ENCODE measurements at regions of chr5 and their contacts with region 1.

Region 1: DNA sequence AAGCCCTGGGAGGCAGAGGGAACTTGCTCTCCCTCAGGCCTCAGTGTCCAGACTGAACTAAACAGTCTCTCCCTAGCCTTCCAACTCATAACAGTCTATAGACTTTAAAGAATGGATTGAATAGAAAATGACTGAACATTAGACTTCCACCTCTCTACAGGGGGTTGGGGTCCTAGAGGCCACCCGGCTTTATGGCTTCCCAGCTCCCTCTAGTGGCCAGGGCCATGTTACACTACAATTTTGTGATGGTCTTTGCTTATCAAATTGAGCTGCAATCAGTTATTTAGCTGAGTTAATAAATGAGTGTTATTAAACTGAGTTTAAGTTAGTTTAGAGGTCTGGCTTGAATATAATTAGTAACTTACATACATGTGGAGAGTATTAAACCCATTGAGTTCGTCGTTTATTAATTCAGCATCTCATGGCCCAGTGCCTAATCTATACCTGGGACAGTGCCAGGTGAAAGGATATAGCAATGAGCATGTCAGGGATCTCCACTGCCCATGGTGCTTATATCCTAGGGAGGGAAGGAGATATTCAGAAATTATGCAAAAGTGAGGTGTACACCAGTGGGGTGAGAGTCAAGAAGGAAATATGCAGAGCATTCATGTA is 105.2 kb downstream of the SH3TC2 start:
- DNase-seq: peak; percentile 66
- H3K4me3 ChIP-seq: no peak overlapping the region
- H3K27ac ChIP-seq: no peak overlapping the region
- H3K4me1 ChIP-seq: no peaks in the 10 kb centered on the region
- H3K27me3 ChIP-seq: no peaks in the 10 kb centered on the region
- CTCF ChIP-seq: peak; percentile 77 to 88
- POLR2A ChIP-seq: no peak

Region 2: GRCh38 chr5:148740966-148741742 is 216.5 kb before region 1 on chr5:
- CTCF ChIA-PET with region 1: interaction called, 245 read pairs
- POLR2A ChIA-PET with region 1: no interaction called
- dilution Hi-C with region 1: no loop called
- intact Hi-C with region 1: loop called (anchors 1 kb)
- DNase-seq: peak; percentile 82
- H3K4me3 ChIP-seq: no peak overlapping the region
- H3K27ac ChIP-seq: no peak overlapping the region
- H3K4me1 ChIP-seq: no peaks in the 10 kb centered on the region
- H3K27me3 ChIP-seq: no peaks in the 10 kb centered on the region
- CTCF ChIP-seq: peak; percentile 49
- POLR2A ChIP-seq: no peak

Region 3: GRCh38 chr5:148826053-148826738 is 131.5 kb before region 1 on chr5 and contains the start of gene ADRB2:
- CTCF ChIA-PET with region 1: interaction called, 149 read pairs
- POLR2A ChIA-PET with region 1: interaction called, 3 read pairs
- dilution Hi-C with region 1: no loop called
- intact Hi-C with region 1: no loop called
- DNase-seq: peak; percentile 94
- H3K4me3 ChIP-seq: peak within 1 kb of the TSS; percentile 15 to 62 (median 49)
- H3K27ac ChIP-seq: peak within 1 kb of the TSS; percentile 42
- H3K4me1 ChIP-seq: peaks cover 34% of the 10 kb centered on the region
- H3K27me3 ChIP-seq: no peaks in the 10 kb centered on the region
- CTCF ChIP-seq: no peak
- POLR2A ChIP-seq: peak; percentile 94
- total RNA-seq, gene ADRB2: 0.60 and 0.86 TPM in 2 replicates

Region 4: DNA sequence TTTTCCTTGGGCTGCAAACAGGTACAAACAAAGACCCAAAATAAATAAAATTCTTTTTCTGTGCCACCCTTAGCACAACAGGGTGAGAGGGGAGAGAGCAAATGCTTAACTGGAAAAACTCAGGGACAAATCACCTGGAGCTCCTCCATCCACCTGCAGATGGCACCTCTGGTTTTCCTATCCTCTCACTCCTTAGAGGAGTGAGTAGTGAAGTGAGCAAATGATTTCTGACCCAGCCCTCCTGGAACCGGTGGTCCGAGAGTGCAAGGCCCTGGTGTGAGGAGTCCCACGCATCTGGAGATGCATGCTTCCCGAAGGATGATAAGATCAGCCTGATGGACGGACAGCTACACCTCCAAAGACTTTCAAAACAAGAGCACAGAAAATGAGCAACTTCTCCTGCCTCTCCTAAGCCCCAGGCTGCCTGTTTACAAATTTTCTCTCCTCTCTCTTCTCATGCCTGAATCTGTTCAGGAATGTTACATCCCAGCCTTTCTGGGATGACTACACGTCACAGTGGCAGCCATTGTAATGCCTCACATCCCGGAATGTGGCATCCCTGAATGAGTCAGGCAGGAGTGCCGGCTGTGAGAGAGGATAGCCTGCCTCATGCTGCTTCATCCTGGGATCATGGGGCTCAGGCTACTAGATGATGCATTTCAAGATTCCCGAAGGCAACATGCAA is 44.8 kb before region 1 on chr5:
- CTCF ChIA-PET with region 1: interaction called, 23 read pairs
- POLR2A ChIA-PET with region 1: no interaction called
- dilution Hi-C with region 1: no loop called
- intact Hi-C with region 1: loop called (anchors 1 kb)
- DNase-seq: peak; percentile 79
- H3K4me3 ChIP-seq: no peak overlapping the region
- H3K27ac ChIP-seq: peak overlapping the region; percentile 96
- H3K4me1 ChIP-seq: peaks cover 55% of the 10 kb centered on the region
- H3K27me3 ChIP-seq: no peaks in the 10 kb centered on the region
- CTCF ChIP-seq: peak in 1 of 2 donors; percentile 4
- POLR2A ChIP-seq: no peak

Region 5: DNA sequence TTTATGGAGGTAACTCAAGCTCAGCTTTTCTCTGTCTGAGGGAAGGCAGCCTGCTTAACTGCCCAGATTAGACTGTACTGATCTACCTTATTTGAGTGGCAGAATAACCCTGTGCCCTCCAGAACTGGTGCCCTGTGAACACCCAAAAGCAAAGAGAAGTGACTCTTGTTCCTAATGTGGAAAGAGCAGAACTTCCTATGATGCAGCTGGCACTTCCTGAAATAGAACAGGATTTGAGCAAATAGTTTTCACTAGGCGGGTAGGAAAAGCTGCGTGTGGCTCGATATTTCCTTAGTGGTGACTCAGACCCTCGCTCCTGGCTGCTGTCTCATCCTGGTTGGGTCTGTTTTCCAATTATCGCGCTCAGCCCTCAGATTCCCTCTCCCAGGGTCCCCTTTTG is 15.3 kb after region 1 on chr5:
- CTCF ChIA-PET with region 1: interaction called, 55 read pairs
- POLR2A ChIA-PET with region 1: no interaction called
- dilution Hi-C with region 1: no loop called
- intact Hi-C with region 1: no loop called
- DNase-seq: peak; percentile 92
- H3K4me3 ChIP-seq: no peak overlapping the region
- H3K27ac ChIP-seq: peak overlapping the region; percentile 99
- H3K4me1 ChIP-seq: peaks cover 46% of the 10 kb centered on the region
- H3K27me3 ChIP-seq: no peaks in the 10 kb centered on the region
- CTCF ChIP-seq: no peak
- POLR2A ChIP-seq: peak; percentile 69

Region 6: GRCh38 chr5:148998174-148998797 is 40.6 kb after region 1 on chr5:
- CTCF ChIA-PET with region 1: interaction called, 42 read pairs
- POLR2A ChIA-PET with region 1: no interaction called
- dilution Hi-C with region 1: no loop called
- intact Hi-C with region 1: loop called (anchors 1 kb)
- DNase-seq: peak; percentile 68
- H3K4me3 ChIP-seq: no peak overlapping the region
- H3K27ac ChIP-seq: no peak overlapping the region
- H3K4me1 ChIP-seq: peaks cover 13% of the 10 kb centered on the region
- H3K27me3 ChIP-seq: no peaks in the 10 kb centered on the region
- CTCF ChIP-seq: peak; percentile 54 to 62
- POLR2A ChIP-seq: no peak

Region 7: DNA sequence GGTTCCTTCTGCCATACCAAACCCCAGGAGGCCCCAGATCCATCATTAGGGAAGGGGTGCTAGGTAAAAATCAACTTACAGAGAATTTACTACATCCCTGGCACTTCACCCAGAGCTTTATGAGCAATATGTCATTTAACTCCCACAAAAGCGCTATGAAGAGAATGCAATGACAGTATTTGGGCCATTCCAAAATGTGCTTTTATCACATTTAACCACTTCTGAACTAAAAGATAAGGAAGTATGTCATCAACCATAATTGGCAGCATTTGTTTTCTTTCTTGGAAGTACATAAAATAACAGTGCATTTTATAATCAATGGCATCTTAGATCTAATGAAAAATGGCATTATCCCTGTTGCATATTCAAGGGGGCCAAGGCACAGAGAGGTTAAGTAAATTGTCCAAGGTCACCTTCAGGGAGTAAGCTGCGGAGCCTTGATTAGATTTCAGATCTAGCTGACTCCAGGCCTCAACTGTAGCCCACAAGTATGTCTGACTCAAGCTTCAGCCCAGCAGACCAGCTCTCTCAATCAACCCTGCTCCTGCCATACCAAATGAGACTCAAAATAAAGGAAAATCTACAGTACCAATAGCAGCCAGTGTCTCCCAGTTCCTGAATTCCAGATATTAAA is 88.6 kb after region 1 on chr5:
- CTCF ChIA-PET with region 1: no interaction called
- POLR2A ChIA-PET with region 1: no interaction called
- dilution Hi-C with region 1: no loop called
- intact Hi-C with region 1: no loop called
- DNase-seq: peak; percentile 21
- H3K4me3 ChIP-seq: no peak overlapping the region
- H3K27ac ChIP-seq: no peak overlapping the region
- H3K4me1 ChIP-seq: peaks cover 15% of the 10 kb centered on the region
- H3K27me3 ChIP-seq: no peaks in the 10 kb centered on the region
- CTCF ChIP-seq: no peak
- POLR2A ChIP-seq: no peak

Measured in endothelial cell of umbilical vein (primary cell).